ENCODE measurements at regions of chr14 and their contacts with region 1.

Region 1: GRCh38 chr14:73785873-73786695 is 65.5 kb upstream of the PTGR2 start:
- DNase-seq: peak; percentile 56

Region 2: GRCh38 chr14:73759714-73760597 is 26.1 kb before region 1 on chr14:
- CTCF ChIA-PET with region 1: interaction called, 7 read pairs
- POLR2A ChIA-PET with region 1: interaction called, 49 read pairs
- DNase-seq: peak; percentile 88

Region 3: DNA sequence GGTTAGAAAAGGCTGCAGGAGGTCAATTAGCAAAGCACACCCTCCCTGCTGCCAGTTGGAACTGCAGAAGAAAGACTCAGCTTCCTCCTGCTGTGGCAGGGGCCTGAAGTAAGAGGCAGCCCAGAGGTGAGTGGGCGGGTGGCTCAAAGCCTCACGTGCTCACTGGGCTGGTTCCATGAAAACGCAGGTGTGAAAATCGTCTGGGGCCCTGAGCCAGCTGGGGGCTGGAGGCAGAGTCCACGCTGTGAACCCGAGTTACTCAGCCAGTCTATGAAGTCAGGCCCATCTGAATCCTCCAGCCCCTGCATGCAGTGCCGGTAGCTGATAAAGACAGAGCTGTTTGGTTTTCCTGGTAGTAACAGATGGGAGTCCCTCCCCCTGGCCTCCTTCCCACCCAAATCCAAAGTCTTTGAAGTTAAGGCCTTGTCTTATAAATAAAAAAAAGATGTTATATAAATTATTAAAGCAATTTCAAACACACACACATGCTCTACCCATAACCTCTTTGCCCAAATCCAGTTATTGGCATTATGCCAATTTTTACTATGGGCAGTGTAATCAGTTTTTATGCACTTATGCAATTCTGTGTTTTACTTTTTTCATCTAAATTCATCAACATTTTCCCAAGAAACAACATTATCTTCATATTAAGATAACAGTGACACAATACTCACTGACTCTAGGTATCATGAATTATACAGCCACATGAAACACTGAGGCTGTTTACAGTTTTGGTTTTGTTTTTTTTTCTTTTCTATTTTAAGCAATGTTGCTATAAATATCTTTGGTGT is 14.0 kb before region 1 on chr14:
- CTCF ChIA-PET with region 1: interaction called, 10 read pairs
- POLR2A ChIA-PET with region 1: interaction called, 22 read pairs
- DNase-seq: peak; percentile 46

Measured in HEK293T (cell line).